ENCODE measurements at regions of chr11 and their contacts with region 1.

Region 1: GRCh38 chr11:33168709-33169200 is 7.5 kb upstream of the CSTF3 start:
- DNase-seq: no peak
- H3K4me3 ChIP-seq: no peak overlapping the region
- H3K27ac ChIP-seq: no peak overlapping the region
- H3K4me1 ChIP-seq: peaks cover 1% of the 10 kb centered on the region
- H3K27me3 ChIP-seq: no peaks in the 10 kb centered on the region
- CTCF ChIP-seq: no peak
- EP300 ChIP-seq: no peak
- POLR2A ChIP-seq: no peak

Region 2: DNA sequence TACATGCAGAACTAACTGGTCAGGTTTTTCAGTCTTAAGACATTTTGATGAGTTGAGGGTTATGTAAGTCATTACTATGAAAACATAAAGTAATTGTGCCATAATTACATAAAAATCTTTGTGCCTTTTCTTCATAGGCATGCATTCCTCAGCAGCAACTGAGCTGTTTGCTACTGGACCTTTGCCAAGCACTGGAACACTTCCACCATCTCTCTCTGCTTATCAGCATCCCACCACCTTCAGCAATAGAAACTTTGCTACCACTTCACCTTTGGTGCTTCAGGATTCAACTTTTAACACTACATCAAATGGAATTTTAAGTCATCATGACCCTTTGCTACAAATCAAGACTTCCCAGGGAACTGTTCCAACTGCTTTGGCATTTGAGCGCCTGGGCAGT is 237.1 kb before region 1 on chr11:
- intact Hi-C with region 1: no loop called
- DNase-seq: no peak
- H3K4me3 ChIP-seq: no peak overlapping the region
- H3K27ac ChIP-seq: no peak overlapping the region
- H3K4me1 ChIP-seq: no peaks in the 10 kb centered on the region
- H3K27me3 ChIP-seq: no peaks in the 10 kb centered on the region
- CTCF ChIP-seq: no peak
- EP300 ChIP-seq: no peak
- POLR2A ChIP-seq: no peak

Region 3: GRCh38 chr11:33110083-33110482 is 58.7 kb before region 1 on chr11:
- intact Hi-C with region 1: no loop called
- DNase-seq: no peak
- H3K4me3 ChIP-seq: no peak overlapping the region
- H3K27ac ChIP-seq: no peak overlapping the region
- H3K4me1 ChIP-seq: peaks cover 2% of the 10 kb centered on the region
- H3K27me3 ChIP-seq: no peaks in the 10 kb centered on the region
- CTCF ChIP-seq: no peak
- EP300 ChIP-seq: no peak
- POLR2A ChIP-seq: no peak

Region 4: GRCh38 chr11:33358150-33358831 is 189.5 kb after region 1 on chr11:
- intact Hi-C with region 1: no loop called
- DNase-seq: no peak
- H3K4me3 ChIP-seq: no peak overlapping the region
- H3K27ac ChIP-seq: no peak overlapping the region
- H3K4me1 ChIP-seq: no peaks in the 10 kb centered on the region
- H3K27me3 ChIP-seq: no peaks in the 10 kb centered on the region
- CTCF ChIP-seq: no peak
- EP300 ChIP-seq: no peak
- POLR2A ChIP-seq: no peak

Region 5: GRCh38 chr11:33389635-33390034 is 220.9 kb after region 1 on chr11:
- intact Hi-C with region 1: no loop called
- DNase-seq: no peak
- H3K4me3 ChIP-seq: no peak overlapping the region
- H3K27ac ChIP-seq: no peak overlapping the region
- H3K4me1 ChIP-seq: no peaks in the 10 kb centered on the region
- H3K27me3 ChIP-seq: no peaks in the 10 kb centered on the region
- CTCF ChIP-seq: no peak
- EP300 ChIP-seq: no peak
- POLR2A ChIP-seq: no peak

Region 6: GRCh38 chr11:33687733-33688479 is 519.2 kb after region 1 on chr11:
- intact Hi-C with region 1: loop called in 1 of 4 experiments (anchors 5 kb)
- DNase-seq: peak in 3 of 5 donors; percentile 29 to 68 (median 43)
- H3K4me3 ChIP-seq: no peak overlapping the region
- H3K27ac ChIP-seq: no peak overlapping the region
- H3K4me1 ChIP-seq: peaks cover 12% of the 10 kb centered on the region
- H3K27me3 ChIP-seq: no peaks in the 10 kb centered on the region
- CTCF ChIP-seq: peak in 2 of 3 donors; percentile 56 to 57
- EP300 ChIP-seq: no peak
- POLR2A ChIP-seq: no peak